ENCODE measurements at regions of chr11 and their contacts with region 1.

Region 1: GRCh38 chr11:102268329-102269193 is 48.7 kb upstream of the BIRC3 start:
- DNase-seq: peak; percentile 71 to 95 (median 82)
- ATAC-seq: peak; percentile 99
- H3K4me3 ChIP-seq: peak overlapping the region; percentile 49
- H3K4me3 Mint-ChIP-seq: peak overlapping the region; percentile 83
- H3K27ac ChIP-seq: no peak overlapping the region
- H3K27ac Mint-ChIP-seq: peak overlapping the region; percentile 78
- H3K4me1 ChIP-seq: peaks cover 20% of the 10 kb centered on the region
- H3K4me1 Mint-ChIP-seq: peaks cover 41% of the 10 kb centered on the region
- H3K27me3 ChIP-seq: no peaks in the 10 kb centered on the region
- H3K27me3 Mint-ChIP-seq: no peaks in the 10 kb centered on the region
- CTCF ChIP-seq: peak; percentile 59

Region 2: GRCh38 chr11:101914738-101915426 is 353.7 kb before region 1 on chr11 and contains the start of gene CEP126:
- CTCF ChIA-PET with region 1: interaction called, 4 read pairs
- POLR2A ChIA-PET with region 1: no interaction called
- intact Hi-C with region 1: loop called in 1 of 2 experiments (anchors 10 kb)
- DNase-seq: peak; percentile 81 to 96 (median 92)
- ATAC-seq: peak; percentile 88
- H3K4me3 ChIP-seq: peak within 1 kb of the TSS; percentile 75
- H3K4me3 Mint-ChIP-seq: peak within 1 kb of the TSS; percentile 96
- H3K27ac ChIP-seq: peak within 1 kb of the TSS; percentile 64 to 69
- H3K27ac Mint-ChIP-seq: peak within 1 kb of the TSS; percentile 87
- H3K4me1 ChIP-seq: peaks cover 10% of the 10 kb centered on the region
- H3K4me1 Mint-ChIP-seq: peaks cover 25% of the 10 kb centered on the region
- H3K27me3 ChIP-seq: no peaks in the 10 kb centered on the region
- H3K27me3 Mint-ChIP-seq: peaks cover 4% of the 10 kb centered on the region
- CTCF ChIP-seq: peak; percentile 9
- total RNA-seq, gene CEP126: 0.96 to 1.2 TPM

Region 3: GRCh38 chr11:102115557-102115956 is 153.0 kb before region 1 on chr11:
- CTCF ChIA-PET with region 1: no interaction called
- POLR2A ChIA-PET with region 1: no interaction called
- intact Hi-C with region 1: no loop called
- DNase-seq: no peak
- ATAC-seq: no peak
- H3K4me3 ChIP-seq: no peak overlapping the region
- H3K4me3 Mint-ChIP-seq: no peak overlapping the region
- H3K27ac ChIP-seq: no peak overlapping the region
- H3K27ac Mint-ChIP-seq: no peak overlapping the region
- H3K4me1 ChIP-seq: peaks cover 11% of the 10 kb centered on the region
- H3K4me1 Mint-ChIP-seq: peaks cover 7% of the 10 kb centered on the region
- H3K27me3 ChIP-seq: peaks cover 14 to 43% of the 10 kb centered on the region in 2 experiments
- H3K27me3 Mint-ChIP-seq: peaks cover 73% of the 10 kb centered on the region
- CTCF ChIP-seq: no peak

Region 4: DNA sequence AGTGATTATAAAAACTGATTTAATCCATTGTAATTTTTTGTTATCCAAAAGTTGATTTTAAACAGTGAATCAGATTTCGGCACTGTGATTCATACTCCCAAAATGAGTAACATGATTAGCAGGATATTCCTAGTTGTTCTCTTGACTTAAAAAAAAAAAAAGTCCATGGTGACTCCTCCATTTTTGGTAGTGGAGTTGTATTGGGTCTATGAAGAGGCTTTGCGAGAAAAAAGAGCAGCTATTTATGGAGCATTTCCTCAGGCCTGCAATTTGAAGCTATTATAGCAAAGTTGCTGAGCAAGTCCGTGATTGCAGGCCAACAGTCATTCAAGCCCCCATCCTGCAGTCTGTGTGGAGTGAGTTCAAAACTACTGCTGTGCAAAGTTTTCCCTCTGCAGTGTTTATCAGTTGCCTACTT is 129.5 kb before region 1 on chr11:
- CTCF ChIA-PET with region 1: no interaction called
- POLR2A ChIA-PET with region 1: no interaction called
- intact Hi-C with region 1: no loop called
- DNase-seq: no peak
- ATAC-seq: no peak
- H3K4me3 ChIP-seq: no peak overlapping the region
- H3K4me3 Mint-ChIP-seq: no peak overlapping the region
- H3K27ac ChIP-seq: no peak overlapping the region
- H3K27ac Mint-ChIP-seq: no peak overlapping the region
- H3K4me1 ChIP-seq: no peaks in the 10 kb centered on the region
- H3K4me1 Mint-ChIP-seq: no peaks in the 10 kb centered on the region
- H3K27me3 ChIP-seq: peaks cover 2 to 9% of the 10 kb centered on the region in 2 experiments
- H3K27me3 Mint-ChIP-seq: peaks cover 8% of the 10 kb centered on the region
- CTCF ChIP-seq: no peak

Region 5: DNA sequence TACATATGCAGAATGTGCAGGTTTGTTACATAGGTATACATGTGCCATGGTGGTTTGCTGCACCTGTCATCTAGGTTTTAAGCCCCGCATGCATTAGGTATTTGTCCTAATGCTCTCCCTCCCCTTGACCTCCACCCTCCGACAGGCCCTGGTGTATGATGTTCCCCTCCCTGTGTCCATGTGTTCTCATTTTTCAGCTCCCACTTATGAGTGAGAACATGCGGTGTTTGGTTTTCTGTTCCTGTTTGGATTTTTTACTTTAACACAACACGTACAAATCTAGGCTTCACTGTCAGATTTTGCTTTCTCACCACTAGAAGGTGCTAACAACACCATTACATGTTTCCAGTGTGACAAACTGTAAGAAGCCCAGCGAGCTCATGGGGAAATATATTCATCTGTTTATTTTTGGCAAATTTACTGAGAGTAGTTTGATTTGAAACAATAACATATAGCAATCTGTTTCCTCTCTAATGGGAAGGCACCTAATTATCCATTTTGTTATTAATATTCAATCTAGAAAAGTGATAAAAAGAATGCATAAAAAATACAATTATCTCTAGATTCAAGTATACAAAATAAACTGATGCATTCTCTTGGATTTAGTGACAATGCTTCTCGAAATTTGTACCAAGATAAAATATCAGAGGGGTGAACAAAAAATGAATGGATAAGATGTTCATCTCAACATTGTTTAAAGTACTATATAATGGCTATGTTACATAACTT is 25.5 kb after region 1 on chr11:
- CTCF ChIA-PET with region 1: interaction called, 14 read pairs
- POLR2A ChIA-PET with region 1: interaction called, 7 read pairs
- intact Hi-C with region 1: no loop called
- DNase-seq: peak in 5 of 14 experiments; percentile 8 to 85 (median 79)
- ATAC-seq: peak; percentile 99
- H3K4me3 ChIP-seq: peak overlapping the region; percentile 48
- H3K4me3 Mint-ChIP-seq: peak overlapping the region; percentile 82
- H3K27ac ChIP-seq: no peak overlapping the region
- H3K27ac Mint-ChIP-seq: peak overlapping the region; percentile 68
- H3K4me1 ChIP-seq: peaks cover 14% of the 10 kb centered on the region
- H3K4me1 Mint-ChIP-seq: peaks cover 36% of the 10 kb centered on the region
- H3K27me3 ChIP-seq: no peaks in the 10 kb centered on the region
- H3K27me3 Mint-ChIP-seq: no peaks in the 10 kb centered on the region
- CTCF ChIP-seq: peak; percentile 92

Region 6: GRCh38 chr11:102317099-102317767 is 48.7 kb after region 1 on chr11 and contains the start of gene BIRC3:
- CTCF ChIA-PET with region 1: interaction called, 4 read pairs
- POLR2A ChIA-PET with region 1: interaction called, 9 read pairs
- intact Hi-C with region 1: loop called in 1 of 2 experiments (anchors 1 kb)
- DNase-seq: peak; percentile 74 to 99 (median 88)
- ATAC-seq: peak; percentile 83
- H3K4me3 ChIP-seq: peak within 1 kb of the TSS; percentile 91
- H3K4me3 Mint-ChIP-seq: peak within 1 kb of the TSS; percentile 97
- H3K27ac ChIP-seq: peak within 1 kb of the TSS; percentile 95 to 96
- H3K27ac Mint-ChIP-seq: peak within 1 kb of the TSS; percentile 93
- H3K4me1 ChIP-seq: peaks cover 42% of the 10 kb centered on the region
- H3K4me1 Mint-ChIP-seq: peaks cover 75% of the 10 kb centered on the region
- H3K27me3 ChIP-seq: no peaks in the 10 kb centered on the region
- H3K27me3 Mint-ChIP-seq: no peaks in the 10 kb centered on the region
- CTCF ChIP-seq: peak; percentile 34
- total RNA-seq, gene BIRC3: 115 to 124 TPM

Region 7: DNA sequence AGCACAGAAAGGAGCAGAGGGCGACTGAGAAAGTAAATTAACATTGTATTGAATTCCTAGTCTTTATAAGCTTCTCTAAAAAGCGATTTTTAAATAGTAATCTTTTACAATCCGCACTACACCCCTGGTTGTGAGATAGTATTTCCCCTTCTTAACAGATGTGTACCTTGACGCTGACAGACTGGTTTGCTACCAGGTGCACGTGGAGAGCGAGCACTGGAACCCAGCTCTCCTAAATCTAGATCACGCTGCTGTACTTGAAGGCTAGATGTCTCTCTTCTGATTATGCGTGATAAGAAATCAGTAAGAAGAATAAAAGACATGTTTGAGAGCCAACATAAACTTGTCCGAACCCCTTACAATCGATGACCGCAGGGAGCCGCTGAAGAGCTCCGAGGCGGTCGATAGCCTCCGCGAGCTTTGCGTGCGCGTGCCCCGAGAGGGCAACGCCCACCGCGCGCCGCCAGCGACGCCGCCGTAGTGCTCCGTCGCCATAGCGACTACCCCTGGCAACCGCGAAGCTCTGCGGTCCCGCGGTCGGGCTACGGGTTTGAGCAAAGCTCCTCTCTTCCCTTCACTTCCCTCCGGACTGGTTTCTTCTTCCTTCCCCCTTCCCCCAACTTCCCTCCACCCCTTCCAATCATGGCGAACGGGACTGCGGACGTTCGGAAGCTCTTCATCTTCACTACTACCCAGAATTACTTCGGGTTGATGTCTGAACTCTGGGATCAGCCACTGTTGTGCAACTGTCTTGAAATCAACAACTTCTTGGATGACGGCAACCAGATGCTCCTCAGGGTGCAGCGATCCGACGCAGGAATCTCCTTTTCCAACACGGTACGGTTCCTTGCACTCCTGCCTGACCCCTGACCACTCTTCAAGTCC is 840.6 kb after region 1 on chr11 and contains the start of gene DYNC2H1:
- CTCF ChIA-PET with region 1: no interaction called
- POLR2A ChIA-PET with region 1: no interaction called
- intact Hi-C with region 1: loop called in 1 of 2 experiments (anchors 10 kb)
- DNase-seq: peak; percentile 74 to 95 (median 83)
- ATAC-seq: peak; percentile 91
- H3K4me3 ChIP-seq: peak within 1 kb of the TSS; percentile 67
- H3K4me3 Mint-ChIP-seq: peak within 1 kb of the TSS; percentile 93
- H3K27ac ChIP-seq: peak within 1 kb of the TSS; percentile 36 to 47
- H3K27ac Mint-ChIP-seq: peak within 1 kb of the TSS; percentile 78
- H3K4me1 ChIP-seq: peaks cover 12% of the 10 kb centered on the region
- H3K4me1 Mint-ChIP-seq: peaks cover 10% of the 10 kb centered on the region
- H3K27me3 ChIP-seq: no peaks in the 10 kb centered on the region
- H3K27me3 Mint-ChIP-seq: peaks cover 7% of the 10 kb centered on the region
- CTCF ChIP-seq: peak; percentile 57
- total RNA-seq, gene DYNC2H1: 2.8 to 3.2 TPM